Esophagus muscularis mucosa (tissue), 4 donors: ENCODE measurements at regions of chr6 and their contacts with region 1.

Region 1: GRCh38 chr6:89080542-89081422 is at the start of gene PNRC1:
- DNase-seq: peak; percentile 100
- H3K4me3 ChIP-seq: peak within 1 kb of the TSS; percentile 91 to 100 (median 96)
- H3K27ac ChIP-seq: peak within 1 kb of the TSS; percentile 100
- H3K4me1 ChIP-seq: peaks cover 21 to 42% (median 41%) of the 10 kb centered on the region in 4 donors
- H3K27me3 ChIP-seq: no peaks in the 10 kb centered on the region
- CTCF ChIP-seq: no peak
- EP300 ChIP-seq: no peak
- POLR2A ChIP-seq: peak; percentile 99
- total RNA-seq, gene PNRC1: 285 to 486 (median 315) TPM

Region 2: DNA sequence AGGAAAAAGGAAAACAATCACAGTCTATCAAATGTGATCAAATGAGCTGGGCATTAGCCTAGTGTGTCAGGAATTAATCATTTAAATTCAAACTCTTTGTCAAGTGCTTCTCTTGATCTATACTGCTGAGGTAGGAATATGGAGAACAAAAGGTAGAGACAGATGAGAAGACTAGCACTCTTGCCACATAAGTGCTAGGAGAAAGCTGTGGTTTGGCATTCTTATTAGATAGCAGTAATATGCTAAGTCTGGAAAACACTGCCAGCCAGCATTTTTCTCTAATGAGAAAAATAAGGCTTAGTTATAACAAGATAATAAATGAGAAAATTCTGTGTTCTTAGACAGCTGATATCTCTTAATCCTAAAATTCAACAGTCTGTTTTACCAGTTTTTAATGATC is 1451.9 kb before region 1 on chr6:
- intact Hi-C with region 1: no loop called
- DNase-seq: no peak
- H3K4me3 ChIP-seq: no peak overlapping the region
- H3K27ac ChIP-seq: no peak overlapping the region
- H3K4me1 ChIP-seq: no peaks in the 10 kb centered on the region
- H3K27me3 ChIP-seq: no peaks in the 10 kb centered on the region
- CTCF ChIP-seq: no peak
- EP300 ChIP-seq: no peak
- POLR2A ChIP-seq: no peak

Region 3: DNA sequence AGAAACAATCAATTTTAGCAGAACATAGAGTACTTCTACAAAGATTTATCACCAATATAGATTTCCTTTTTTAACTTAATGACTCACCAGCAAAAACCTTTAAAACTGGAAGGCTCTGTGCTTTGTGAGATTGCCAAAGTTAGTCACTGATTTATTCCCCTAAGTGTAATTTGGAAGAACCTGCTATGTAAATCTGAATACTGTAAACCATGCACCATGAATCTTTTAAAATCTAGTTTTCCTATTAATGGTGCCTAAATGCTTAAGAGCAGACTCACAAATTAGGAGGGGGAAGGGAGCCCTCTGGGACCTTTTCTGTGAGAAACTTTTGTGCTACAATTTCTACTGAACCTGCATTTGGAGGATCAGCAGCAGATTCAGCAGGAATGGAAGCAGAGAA is 58.0 kb before region 1 on chr6:
- intact Hi-C with region 1: loop called (anchors 5 kb)
- DNase-seq: no peak
- H3K4me3 ChIP-seq: no peak overlapping the region
- H3K27ac ChIP-seq: peak overlapping the region; percentile 77 to 85 (median 80)
- H3K4me1 ChIP-seq: peaks cover 28 to 46% (median 37%) of the 10 kb centered on the region in 4 donors
- H3K27me3 ChIP-seq: no peaks in the 10 kb centered on the region
- CTCF ChIP-seq: no peak
- EP300 ChIP-seq: no peak
- POLR2A ChIP-seq: no peak

Region 4: DNA sequence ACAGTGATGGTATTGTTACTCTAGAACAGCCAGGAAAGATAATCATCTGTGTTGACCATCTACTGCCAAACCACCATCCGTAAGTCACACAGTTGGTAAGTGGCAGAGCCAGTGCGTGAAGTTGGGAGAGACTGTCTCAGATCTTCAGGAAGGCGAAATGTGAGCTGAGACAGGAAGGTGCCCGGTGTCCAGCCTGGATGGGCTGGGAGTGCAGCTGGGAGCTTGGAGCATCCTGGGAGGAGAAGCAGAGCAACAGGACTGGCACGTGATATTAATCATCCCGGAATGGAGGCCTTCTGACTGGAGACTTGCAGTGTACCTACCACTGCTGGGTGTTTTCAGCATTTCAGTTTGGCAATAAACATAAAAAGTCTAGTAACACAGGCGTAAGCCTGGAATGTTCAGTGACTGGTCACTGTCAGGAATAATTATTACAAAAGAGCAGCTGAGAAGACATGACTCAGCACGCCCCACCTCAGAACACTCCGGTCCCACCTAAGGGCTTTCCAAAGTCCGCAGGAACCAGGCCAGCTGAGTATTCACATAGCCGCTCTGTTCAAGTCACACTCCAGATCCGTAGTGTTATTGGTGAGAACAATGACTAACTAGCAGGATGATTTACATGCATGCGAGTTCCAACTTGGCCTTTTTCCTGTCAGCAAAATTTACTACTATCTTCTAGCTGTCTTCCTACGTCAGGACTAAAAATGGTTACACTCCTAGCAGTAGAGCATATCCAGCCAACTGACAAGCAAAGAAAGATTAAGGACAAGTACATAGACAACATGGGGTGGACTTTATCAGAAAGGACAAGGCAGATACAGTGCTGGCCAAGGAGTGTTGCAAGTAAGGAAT is 45.3 kb before region 1 on chr6:
- intact Hi-C with region 1: loop called (anchors 2 kb)
- DNase-seq: peak; percentile 97
- H3K4me3 ChIP-seq: peak overlapping the region; percentile 3 to 43 (median 22)
- H3K27ac ChIP-seq: peak overlapping the region; percentile 85 to 94 (median 90)
- H3K4me1 ChIP-seq: peaks cover 32 to 48% (median 39%) of the 10 kb centered on the region in 4 donors
- H3K27me3 ChIP-seq: no peaks in the 10 kb centered on the region
- CTCF ChIP-seq: peak in 1 of 3 experiments; percentile 9
- EP300 ChIP-seq: peak; percentile 97
- POLR2A ChIP-seq: peak; percentile 70

Region 5: DNA sequence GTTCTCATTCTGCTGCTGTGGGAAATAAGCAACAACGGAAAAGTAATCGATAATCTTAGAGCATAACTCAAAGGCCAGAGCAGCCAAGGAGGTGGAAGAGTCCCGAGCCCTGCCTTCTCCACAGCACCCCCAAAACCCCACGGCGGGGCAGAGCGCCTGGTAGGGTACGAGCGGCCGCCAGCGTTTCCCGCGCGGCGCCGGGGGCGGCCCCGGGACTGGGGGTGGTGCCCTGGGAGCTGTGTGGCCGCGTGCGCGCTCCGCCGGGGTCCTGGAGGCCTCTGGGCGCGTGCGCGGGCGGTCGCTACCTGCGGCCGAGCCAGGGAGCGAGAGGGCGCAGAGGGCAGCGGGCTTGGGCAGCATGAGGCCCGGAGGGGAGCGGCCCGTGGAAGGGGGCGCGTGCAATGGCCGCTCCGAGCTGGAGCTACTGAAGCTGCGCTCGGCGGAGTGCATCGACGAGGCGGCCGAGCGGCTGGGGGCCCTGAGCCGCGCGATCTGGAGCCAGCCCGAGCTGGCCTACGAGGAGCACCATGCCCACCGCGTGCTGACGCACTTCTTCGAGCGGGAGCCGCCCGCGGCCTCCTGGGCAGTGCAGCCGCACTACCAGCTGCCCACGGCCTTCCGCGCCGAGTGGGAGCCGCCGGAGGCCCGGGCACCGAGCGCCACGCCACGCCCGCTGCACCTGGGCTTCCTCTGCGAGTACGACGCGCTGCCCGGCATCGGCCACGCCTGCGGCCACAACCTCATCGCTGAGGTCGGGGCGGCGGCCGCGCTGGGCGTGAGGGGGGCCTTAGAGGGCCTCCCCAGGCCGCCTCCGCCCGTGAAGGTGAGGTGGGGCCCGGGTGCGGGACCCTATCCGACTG is 65.2 kb after region 1 on chr6 and contains the start of gene PM20D2:
- intact Hi-C with region 1: loop called (anchors 2 kb)
- DNase-seq: no peak
- H3K4me3 ChIP-seq: peak within 1 kb of the TSS; percentile 74 to 98 (median 84)
- H3K27ac ChIP-seq: peak within 1 kb of the TSS; percentile 89 to 96 (median 90)
- H3K4me1 ChIP-seq: peaks cover 4 to 46% (median 34%) of the 10 kb centered on the region in 4 donors
- H3K27me3 ChIP-seq: no peaks in the 10 kb centered on the region
- CTCF ChIP-seq: no peak
- EP300 ChIP-seq: no peak
- POLR2A ChIP-seq: peak; percentile 79
- total RNA-seq, gene PM20D2: 14.5 to 27.6 (median 23.7) TPM